ENCODE measurements at regions of chr1 and their contacts with region 1.

Region 1: DNA sequence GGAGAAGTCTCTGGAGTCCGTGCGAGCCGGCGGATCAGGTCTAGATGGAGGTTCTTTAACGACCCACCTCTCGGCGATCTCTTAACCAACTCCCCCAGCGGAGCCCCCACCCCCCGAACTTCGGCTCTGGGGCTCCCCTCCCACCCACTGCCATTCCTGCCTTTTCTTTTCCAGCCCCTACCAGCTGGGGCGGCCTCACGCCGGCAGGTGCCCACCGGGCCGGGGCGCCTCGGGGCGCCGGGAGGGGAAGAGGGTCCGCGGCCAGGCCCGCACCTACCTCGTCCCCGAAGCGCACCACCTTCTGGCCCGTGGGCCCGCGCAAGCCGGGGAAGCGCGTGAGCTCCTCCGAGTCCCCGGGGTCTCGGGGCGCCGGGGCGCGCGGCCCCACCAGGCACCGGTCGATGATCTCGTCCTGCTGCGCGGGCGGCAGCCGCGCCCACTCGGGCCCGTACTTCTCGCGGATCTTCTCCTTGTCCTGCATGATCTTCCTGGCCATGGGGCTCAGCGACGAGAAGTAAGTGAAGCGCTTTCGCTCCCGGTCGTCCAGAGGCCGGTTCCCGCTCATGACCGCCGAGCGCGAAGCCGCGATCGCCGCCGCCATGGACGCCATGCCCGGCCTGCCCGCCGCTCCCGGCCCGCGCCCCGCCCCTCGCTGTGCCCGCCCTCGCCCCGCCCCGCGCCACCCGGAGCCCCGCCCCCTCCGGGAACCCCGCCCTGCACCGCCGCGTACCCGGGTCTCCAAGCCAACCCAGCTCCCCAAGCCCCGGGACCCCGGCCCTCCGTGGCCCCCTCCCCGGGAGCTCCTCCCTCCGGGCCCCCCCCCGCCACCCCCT is at the start of gene C1orf198:
- DNase-seq: peak; percentile 76 to 89 (median 85)
- ATAC-seq: peak; percentile 26 to 94 (median 86)
- H3K4me3 ChIP-seq: peak within 1 kb of the TSS; percentile 69 to 98 (median 91)
- H3K27ac ChIP-seq: peak within 1 kb of the TSS; percentile 75 to 97 (median 88)
- H3K4me1 ChIP-seq: peaks cover 7 to 62% (median 43%) of the 10 kb centered on the region in 12 donors
- H3K27me3 ChIP-seq: no peaks in the 10 kb centered on the region
- CTCF ChIP-seq: no peak
- POLR2A ChIP-seq: peak in 1 of 2 donors; percentile 73
- total RNA-seq, gene C1orf198: 29.7 to 145 (median 63.8) TPM

Region 2: GRCh38 chr1:230537456-230537855 is 330.7 kb before region 1 on chr1:
- intact Hi-C with region 1: no loop called
- DNase-seq: no peak
- ATAC-seq: no peak
- H3K4me3 ChIP-seq: no peak overlapping the region
- H3K27ac ChIP-seq: no peak overlapping the region
- H3K4me1 ChIP-seq: no peaks in the 10 kb centered on the region
- H3K27me3 ChIP-seq: no peaks in the 10 kb centered on the region
- CTCF ChIP-seq: no peak
- POLR2A ChIP-seq: no peak

Region 3: GRCh38 chr1:230807029-230807428 is 61.1 kb before region 1 on chr1:
- intact Hi-C with region 1: loop called in 6 of 10 experiments (anchors 5 to 10 kb)
- DNase-seq: peak; percentile 70 to 90 (median 83)
- ATAC-seq: peak; percentile 97 to 98 (median 98)
- H3K4me3 ChIP-seq: no peak overlapping the region
- H3K27ac ChIP-seq: peak overlapping the region in 10 of 12 donors; percentile 41 to 79 (median 60)
- H3K4me1 ChIP-seq: peaks cover 0 to 26% (median 9%) of the 10 kb centered on the region in 12 donors
- H3K27me3 ChIP-seq: no peaks in the 10 kb centered on the region
- CTCF ChIP-seq: no peak
- POLR2A ChIP-seq: no peak

Region 4: DNA sequence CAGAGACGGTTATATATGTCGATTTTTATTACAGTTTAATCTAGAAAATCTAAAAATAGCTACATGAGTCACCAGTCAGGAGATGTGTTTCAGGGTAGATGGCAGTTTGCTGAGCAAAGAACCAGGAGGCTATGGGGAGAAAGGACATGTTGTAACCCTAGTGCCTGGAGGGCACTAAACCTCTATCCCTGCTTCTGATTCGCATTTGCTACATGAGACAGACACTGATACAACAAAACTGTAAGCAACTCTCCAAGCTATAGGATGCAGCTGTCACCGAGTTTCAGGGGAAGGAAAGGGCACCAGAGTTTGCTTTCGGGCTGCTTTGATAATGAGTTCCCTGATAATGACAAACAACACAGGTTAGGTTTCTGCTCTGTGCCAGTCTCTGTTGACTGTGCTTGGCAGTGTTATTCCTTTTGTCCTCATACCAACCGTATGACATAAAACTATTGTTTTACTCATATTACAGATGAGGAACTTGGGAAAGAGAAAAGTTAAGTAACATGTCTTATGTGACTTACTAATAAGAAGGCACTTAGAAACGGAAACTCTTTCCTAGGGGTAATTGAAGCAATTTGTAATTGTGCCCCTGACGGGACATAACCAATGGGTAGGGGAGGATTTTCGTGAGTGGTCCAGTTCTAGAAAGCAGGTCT is 42.9 kb before region 1 on chr1:
- intact Hi-C with region 1: loop called in 7 of 10 experiments (anchors 2 to 10 kb)
- DNase-seq: no peak
- ATAC-seq: peak; percentile 66 to 81 (median 72)
- H3K4me3 ChIP-seq: no peak overlapping the region
- H3K27ac ChIP-seq: peak overlapping the region; percentile 78 to 94 (median 82)
- H3K4me1 ChIP-seq: peaks cover 4 to 87% (median 63%) of the 10 kb centered on the region in 12 donors
- H3K27me3 ChIP-seq: no peaks in the 10 kb centered on the region
- CTCF ChIP-seq: no peak
- POLR2A ChIP-seq: no peak

Region 5: DNA sequence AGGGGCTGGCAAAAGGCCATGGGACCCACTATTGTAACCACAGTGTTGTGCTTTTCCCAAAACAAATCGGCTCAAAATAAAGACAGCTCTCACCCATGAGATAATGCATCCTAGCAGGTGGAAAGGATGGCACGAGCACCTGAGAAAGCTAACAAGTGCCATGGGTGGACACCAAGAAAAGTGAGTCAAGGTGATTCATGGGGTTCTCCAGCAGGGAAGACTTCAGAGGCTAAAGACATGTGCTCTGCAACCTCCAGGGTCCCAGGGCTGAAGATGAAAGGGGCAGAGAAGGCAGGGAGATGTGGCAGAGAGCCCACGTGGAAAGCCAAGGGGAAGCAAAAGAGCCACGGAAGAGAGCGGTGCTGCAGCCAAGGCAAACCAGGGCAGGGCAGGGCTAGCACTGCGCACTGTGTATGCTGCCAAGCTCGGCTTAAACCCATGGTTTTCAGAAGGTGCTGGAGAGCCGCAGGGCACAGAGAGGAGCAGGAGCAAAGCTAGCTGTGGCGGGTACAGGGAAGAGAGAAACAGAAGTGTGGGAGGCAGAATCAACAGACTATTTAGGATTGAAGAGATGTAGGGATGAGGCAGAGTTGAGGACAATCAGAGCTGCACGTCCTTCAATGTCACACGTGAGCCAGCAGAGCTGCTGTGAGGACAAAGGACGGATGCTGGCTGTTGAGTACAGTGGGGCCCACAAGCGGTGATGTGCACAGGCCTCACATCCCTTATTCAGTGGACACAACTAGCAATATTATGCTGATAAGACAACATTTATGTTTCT is 42.0 kb after region 1 on chr1:
- intact Hi-C with region 1: loop called in 3 of 10 experiments (anchors 5 kb)
- DNase-seq: peak in 3 of 5 donors; percentile 46 to 71 (median 67)
- ATAC-seq: peak; percentile 93 to 96 (median 94)
- H3K4me3 ChIP-seq: no peak overlapping the region
- H3K27ac ChIP-seq: peak overlapping the region in 7 of 12 donors; percentile 15 to 56 (median 34)
- H3K4me1 ChIP-seq: peaks cover 0 to 13% (median 7%) of the 10 kb centered on the region in 12 donors
- H3K27me3 ChIP-seq: no peaks in the 10 kb centered on the region
- CTCF ChIP-seq: no peak
- POLR2A ChIP-seq: no peak

Region 6: GRCh38 chr1:230917284-230918135 is 49.4 kb after region 1 on chr1:
- intact Hi-C with region 1: loop called in 4 of 10 experiments (anchors 2 to 5 kb)
- DNase-seq: peak; percentile 57 to 80 (median 63)
- ATAC-seq: peak; percentile 59 to 90 (median 79)
- H3K4me3 ChIP-seq: no peak overlapping the region
- H3K27ac ChIP-seq: no peak overlapping the region
- H3K4me1 ChIP-seq: no peaks in the 10 kb centered on the region
- H3K27me3 ChIP-seq: no peaks in the 10 kb centered on the region
- CTCF ChIP-seq: peak; percentile 43 to 79 (median 62)
- POLR2A ChIP-seq: no peak

Region 7: GRCh38 chr1:230948301-230948700 is 80.2 kb after region 1 on chr1:
- intact Hi-C with region 1: no loop called
- DNase-seq: no peak
- ATAC-seq: no peak
- H3K4me3 ChIP-seq: no peak overlapping the region
- H3K27ac ChIP-seq: no peak overlapping the region
- H3K4me1 ChIP-seq: no peaks in the 10 kb centered on the region
- H3K27me3 ChIP-seq: no peaks in the 10 kb centered on the region
- CTCF ChIP-seq: no peak
- POLR2A ChIP-seq: no peak

Region 8: GRCh38 chr1:230978491-230979388 is 110.6 kb after region 1 on chr1 and contains the starts of genes ARV1 and TTC13:
- intact Hi-C with region 1: loop called in 1 of 10 experiments (anchors 5 kb)
- DNase-seq: peak; percentile 98 to 100 (median 99)
- ATAC-seq: peak; percentile 100
- H3K4me3 ChIP-seq: peak within 1 kb of the TSS; percentile 40 to 92 (median 80)
- H3K27ac ChIP-seq: peak within 1 kb of the TSS; percentile 75 to 88 (median 80)
- H3K4me1 ChIP-seq: peaks cover 0 to 41% (median 20%) of the 10 kb centered on the region in 12 donors
- H3K27me3 ChIP-seq: no peaks in the 10 kb centered on the region
- CTCF ChIP-seq: peak in 7 of 12 donors; percentile 19 to 48 (median 28)
- POLR2A ChIP-seq: peak in 1 of 2 donors; percentile 79
- total RNA-seq, gene ARV1: 16.3 to 24.8 (median 22.0) TPM
- total RNA-seq, gene TTC13: 5.8 to 9.6 (median 6.9) TPM